Right cardiac atrium (tissue), 5 donors: ENCODE measurements at regions of chr12 and their contacts with region 1.

Region 1: DNA sequence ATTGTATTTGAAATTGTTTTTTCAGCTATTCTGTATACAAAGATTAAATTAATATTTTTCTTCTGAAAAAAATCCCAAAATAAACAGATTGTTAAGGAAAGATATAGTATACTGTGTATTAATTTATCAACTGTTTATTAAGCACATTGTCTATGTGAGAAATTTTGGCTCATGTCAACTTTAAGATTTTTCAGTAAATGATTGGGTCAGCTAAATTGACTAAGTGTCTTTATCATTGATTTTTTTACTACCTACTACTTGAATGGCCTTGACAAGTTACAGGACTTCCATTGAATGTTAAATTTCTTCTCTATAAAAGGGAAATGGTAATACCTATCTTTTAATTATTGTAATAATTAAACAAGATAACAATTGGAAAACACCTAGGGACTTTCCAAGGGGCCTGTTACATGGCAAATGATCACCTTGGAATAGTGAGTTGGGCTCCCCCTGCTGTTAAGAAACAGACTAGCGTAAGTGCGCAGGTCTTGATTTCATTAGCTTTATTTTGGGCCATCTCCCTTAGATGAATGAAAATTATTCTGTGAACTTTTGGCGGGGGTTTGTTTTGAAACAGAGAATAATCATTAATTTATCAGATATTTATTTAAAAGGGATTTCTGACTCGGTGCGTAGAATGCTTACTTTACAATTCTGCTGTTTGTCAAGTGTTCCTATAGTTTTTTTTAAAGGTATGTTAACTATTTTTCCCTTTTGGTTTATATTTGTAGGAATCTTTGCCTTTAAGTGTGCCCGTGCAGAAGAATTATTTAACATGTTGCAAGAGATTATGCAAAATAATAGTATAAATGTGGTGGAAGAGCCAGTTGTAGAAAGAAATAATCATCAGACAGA is 14.5 kb upstream of the CCT2 start:
- DNase-seq: peak in 2 of 3 donors; percentile 20 to 59
- ATAC-seq: peak; percentile 56 to 64
- H3K4me3 ChIP-seq: no peak overlapping the region
- H3K27ac ChIP-seq: no peak overlapping the region
- H3K4me1 ChIP-seq: no peaks in the 10 kb centered on the region
- H3K27me3 ChIP-seq: no peaks in the 10 kb centered on the region

Region 2: GRCh38 chr12:69388371-69388770 is 182.4 kb before region 1 on chr12:
- intact Hi-C with region 1: loop called in 2 of 4 experiments (anchors 10 kb)
- DNase-seq: no peak
- ATAC-seq: no peak
- H3K4me3 ChIP-seq: no peak overlapping the region
- H3K27ac ChIP-seq: no peak overlapping the region
- H3K4me1 ChIP-seq: no peaks in the 10 kb centered on the region
- H3K27me3 ChIP-seq: no peaks in the 10 kb centered on the region

Region 3: DNA sequence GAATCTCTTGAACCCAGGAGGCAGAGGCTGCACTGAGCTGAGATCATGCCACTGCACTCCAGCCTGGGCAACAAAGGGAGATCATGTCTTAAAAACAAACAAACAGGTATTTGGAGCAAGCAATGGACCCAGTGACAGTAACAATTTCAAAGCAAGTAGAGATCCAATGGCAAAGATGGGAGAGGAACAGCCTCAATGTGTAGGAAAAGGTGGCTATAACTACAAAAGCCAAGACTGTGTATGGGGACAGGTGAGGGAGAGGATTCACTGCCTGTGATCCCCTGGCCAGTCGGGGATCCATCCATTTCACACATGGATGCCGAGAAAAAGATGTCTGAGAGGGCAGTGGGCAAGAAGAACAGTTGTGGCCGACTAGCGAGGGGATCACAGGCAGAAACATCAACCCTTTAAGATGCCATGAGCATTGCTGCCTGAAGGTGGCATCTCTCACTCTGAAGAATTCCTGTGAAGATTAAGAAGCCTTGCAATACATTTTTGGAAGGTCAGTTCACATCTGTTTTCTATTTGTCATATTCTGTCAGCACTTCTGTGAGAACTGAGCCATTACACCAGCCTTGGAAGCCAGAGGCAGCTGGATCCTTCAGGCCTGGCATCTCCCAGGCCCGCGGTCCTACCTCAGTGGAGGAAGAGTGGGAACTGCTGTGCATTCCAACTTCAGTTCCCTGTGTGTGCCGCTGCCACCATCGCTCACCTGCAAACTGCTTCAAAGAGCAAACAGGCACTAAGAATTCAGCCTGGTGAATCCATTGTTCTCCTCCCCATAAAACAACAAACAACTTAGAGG is 155.1 kb before region 1 on chr12:
- intact Hi-C with region 1: loop called in 3 of 4 experiments (anchors 10 kb)
- DNase-seq: peak; percentile 48 to 72 (median 67)
- ATAC-seq: peak; percentile 88 to 89
- H3K4me3 ChIP-seq: no peak overlapping the region
- H3K27ac ChIP-seq: no peak overlapping the region
- H3K4me1 ChIP-seq: peaks cover 4% of the 10 kb centered on the region
- H3K27me3 ChIP-seq: no peaks in the 10 kb centered on the region

Region 4: GRCh38 chr12:69470189-69471075 is 100.3 kb before region 1 on chr12 and contains the start of gene FRS2:
- intact Hi-C with region 1: loop called in 3 of 4 experiments (anchors 5 to 10 kb)
- DNase-seq: peak; percentile 92 to 97 (median 96)
- ATAC-seq: peak; percentile 98 to 99
- H3K4me3 ChIP-seq: peak within 1 kb of the TSS; percentile 84
- H3K27ac ChIP-seq: peak within 1 kb of the TSS; percentile 56
- H3K4me1 ChIP-seq: peaks cover 6% of the 10 kb centered on the region
- H3K27me3 ChIP-seq: no peaks in the 10 kb centered on the region
- total RNA-seq, gene FRS2: 26.2 to 38.6 (median 29.7) TPM

Region 5: DNA sequence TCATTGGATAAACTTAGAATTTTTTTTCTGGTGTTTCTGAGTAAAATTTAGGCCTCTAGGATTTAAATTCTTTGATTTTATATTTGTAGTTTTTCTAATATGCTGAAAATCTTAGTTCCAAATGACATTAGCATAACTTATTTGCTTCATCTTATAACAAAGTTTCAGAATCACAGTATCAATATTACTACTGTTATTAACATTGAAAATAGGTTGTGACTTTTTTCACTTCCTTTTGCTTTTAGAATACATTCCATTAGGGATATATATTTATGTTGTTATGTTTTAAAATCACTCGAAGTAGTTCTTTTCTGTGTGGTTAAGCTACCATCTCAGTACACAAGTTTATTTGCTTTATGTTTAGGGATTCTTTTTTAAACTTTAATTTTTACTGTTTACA is 180.7 kb after region 1 on chr12:
- intact Hi-C with region 1: no loop called
- DNase-seq: no peak
- ATAC-seq: no peak
- H3K4me3 ChIP-seq: no peak overlapping the region
- H3K27ac ChIP-seq: no peak overlapping the region
- H3K4me1 ChIP-seq: no peaks in the 10 kb centered on the region
- H3K27me3 ChIP-seq: no peaks in the 10 kb centered on the region